Lower leg skin (tissue), 4 donors: ENCODE measurements at regions of chr6 and their contacts with region 1.

Region 1: GRCh38 chr6:110682460-110682853 is 132.8 kb downstream of the CDK19 start:
- DNase-seq: peak in 1 of 2 donors; percentile 77
- H3K4me3 ChIP-seq: no peak overlapping the region
- CTCF ChIP-seq: no peak
- POLR2A ChIP-seq: no peak

Region 2: DNA sequence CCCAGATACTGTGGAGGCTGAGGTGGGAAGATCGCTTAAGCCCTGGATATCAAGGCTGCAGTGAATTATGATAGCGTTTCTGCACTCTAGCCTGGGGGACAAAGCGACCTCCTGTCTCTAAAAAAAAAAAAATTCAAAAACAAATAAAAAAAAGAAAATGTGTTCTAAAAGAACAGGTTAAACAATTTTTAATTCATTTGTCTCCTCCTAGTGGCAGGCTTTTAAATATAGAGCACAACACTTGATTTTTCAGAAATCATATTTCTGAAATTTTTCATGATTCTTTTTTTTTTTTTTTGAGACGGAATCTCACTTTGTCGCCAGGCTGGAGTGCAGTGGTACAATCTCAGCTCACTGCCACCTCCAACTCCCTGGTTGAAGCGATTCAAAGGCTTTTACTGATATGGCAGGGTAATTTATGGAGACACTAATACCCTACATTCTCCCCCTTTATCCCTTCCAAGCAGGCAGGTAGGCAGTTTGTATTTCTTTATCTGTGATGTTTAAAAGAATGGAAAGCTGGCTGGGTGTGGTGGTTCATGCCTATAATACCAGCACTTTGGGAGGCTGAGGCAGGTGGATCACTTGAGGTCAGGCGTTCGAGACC is 267.3 kb after region 1 on chr6:
- intact Hi-C with region 1: loop called (anchors 5 kb)
- DNase-seq: no peak
- H3K4me3 ChIP-seq: no peak overlapping the region
- CTCF ChIP-seq: no peak
- POLR2A ChIP-seq: no peak